Activated naive CD4-positive, alpha-beta T cell treated with anti-CD3 and anti-CD28 coated beads, Interleukin-2, amount 10 ng/mL, durations not matched to agents 7 days and 5 days (primary cell): ENCODE measurements at regions of chr5 and their contacts with region 1.

Region 1: DNA sequence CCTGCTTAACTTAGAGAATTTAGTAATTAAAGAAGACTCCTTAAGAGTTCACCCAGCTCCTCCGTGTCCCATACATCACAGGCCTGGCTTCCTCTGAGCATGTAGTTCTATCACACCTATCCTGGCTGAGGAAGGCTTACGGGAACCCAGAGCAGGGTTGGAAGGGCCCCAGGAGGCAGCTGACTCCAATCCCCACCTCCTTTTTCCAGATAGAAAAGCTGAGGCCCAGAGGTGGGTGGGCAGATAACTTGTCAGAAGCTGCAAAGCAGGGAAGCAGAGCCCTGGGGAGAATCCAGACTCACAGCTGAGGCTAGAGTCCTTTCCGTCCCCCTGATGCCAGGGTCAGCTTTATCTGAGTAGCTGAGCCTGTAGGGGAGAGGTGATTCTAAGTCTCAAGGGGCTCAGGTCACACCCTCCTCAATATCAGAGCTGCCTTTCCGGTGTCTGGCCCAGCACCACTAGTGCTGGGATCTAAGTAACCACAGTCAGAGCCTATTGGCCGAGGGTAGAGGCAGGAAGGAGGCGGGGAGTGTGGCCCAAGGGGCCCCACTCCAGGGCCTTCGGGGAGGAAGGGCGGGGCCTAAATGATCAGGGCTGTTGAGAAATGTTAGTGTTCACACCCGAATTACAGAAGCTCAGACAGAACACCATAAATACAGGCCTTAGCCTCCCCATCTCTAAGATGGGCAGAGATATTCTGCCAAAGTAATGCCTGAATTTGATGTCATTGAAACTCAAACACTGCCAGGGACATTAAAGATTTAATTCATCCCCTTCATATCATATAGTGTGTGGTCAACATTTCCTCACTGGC is 9.9 kb downstream of the CCDC69 start:
- DNase-seq: peak; percentile 94
- H3K4me3 Mint-ChIP-seq: peak overlapping the region; percentile 81
- H3K27ac Mint-ChIP-seq: peak overlapping the region; percentile 99
- H3K4me1 Mint-ChIP-seq: peaks cover 87% of the 10 kb centered on the region
- H3K27me3 Mint-ChIP-seq: no peaks in the 10 kb centered on the region

Region 2: GRCh38 chr5:151115274-151115905 is 98.6 kb before region 1 on chr5:
- CTCF ChIA-PET with region 1: no interaction called
- DNase-seq: peak; percentile 80
- H3K4me3 Mint-ChIP-seq: no peak overlapping the region
- H3K27ac Mint-ChIP-seq: peak overlapping the region; percentile 38
- H3K4me1 Mint-ChIP-seq: no peaks in the 10 kb centered on the region
- H3K27me3 Mint-ChIP-seq: no peaks in the 10 kb centered on the region

Region 3: DNA sequence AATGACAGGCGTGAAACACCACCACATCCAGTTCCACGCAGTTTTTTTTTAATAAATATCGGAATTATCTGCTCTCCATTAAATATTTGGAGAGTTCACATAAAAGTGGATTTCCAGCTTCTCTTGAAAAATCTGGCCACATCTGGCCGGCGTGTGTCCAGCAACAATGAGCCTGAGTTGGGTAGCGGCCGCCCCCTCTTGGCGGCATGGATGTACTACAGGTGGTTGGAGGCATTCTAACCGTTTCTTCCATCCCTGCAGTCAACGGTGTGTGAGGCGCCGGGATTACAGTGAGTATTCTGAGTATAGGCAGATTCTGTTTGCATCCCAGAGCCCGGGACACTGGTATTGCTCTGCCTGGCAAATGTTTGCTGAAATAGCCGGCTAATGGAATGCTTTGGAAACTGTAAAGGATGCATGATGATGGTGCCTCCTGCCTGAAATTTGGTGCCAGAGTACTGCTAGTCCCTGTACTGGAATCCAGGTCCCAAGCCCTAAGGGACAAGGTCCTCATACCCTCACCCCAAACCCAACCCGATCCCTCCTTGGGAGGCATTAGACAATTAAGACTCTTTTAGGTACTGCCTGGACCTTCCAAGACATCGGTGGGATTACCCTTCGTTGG is 25.3 kb after region 1 on chr5:
- CTCF ChIA-PET with region 1: interaction called, 10 read pairs
- DNase-seq: peak; percentile 65
- H3K4me3 Mint-ChIP-seq: no peak overlapping the region
- H3K27ac Mint-ChIP-seq: no peak overlapping the region
- H3K4me1 Mint-ChIP-seq: peaks cover 30% of the 10 kb centered on the region
- H3K27me3 Mint-ChIP-seq: no peaks in the 10 kb centered on the region

Region 4: DNA sequence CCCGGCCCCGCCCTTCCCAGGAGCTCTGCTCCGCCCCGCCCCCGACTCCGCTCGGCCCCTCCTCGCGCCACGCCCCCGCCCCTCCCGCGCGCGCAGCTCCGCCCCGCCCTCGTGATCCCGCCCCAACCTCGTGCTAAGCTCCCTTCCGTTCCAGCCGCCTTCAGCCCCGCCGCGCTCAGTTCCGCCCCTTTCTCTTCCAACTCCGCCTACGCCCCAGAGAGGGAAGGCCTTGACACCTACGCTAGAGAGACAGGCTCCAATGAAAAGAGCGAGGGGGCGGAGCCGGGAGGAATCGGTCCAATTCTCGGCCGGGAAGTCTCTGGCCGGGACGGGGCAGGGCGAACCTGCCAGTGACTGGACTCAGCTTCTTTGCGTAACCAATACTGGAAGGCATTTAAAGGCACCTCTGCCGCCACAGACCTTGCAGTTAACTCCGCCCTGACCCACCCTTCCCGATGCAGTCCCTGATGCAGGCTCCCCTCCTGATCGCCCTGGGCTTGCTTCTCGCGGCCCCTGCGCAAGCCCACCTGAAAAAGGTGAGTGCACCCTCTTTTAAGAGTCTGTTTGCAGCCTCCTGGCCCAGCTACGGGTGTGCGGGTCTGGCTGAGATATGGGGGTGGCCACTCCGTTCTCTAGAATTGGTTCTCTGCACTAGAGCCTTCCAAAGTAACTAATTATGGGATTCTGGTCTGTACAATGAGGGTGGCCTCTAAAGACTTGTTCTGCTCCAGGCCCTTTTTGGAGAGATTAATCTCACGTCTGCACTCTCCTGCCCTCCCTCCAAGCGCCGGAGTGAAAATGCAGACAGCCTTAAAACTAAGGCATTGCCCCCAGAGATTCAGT is 39.0 kb after region 1 on chr5 and contains the start of gene GM2A:
- CTCF ChIA-PET with region 1: interaction called, 15 read pairs
- DNase-seq: peak; percentile 99
- H3K4me3 Mint-ChIP-seq: peak within 1 kb of the TSS; percentile 89
- H3K27ac Mint-ChIP-seq: peak within 1 kb of the TSS; percentile 96
- H3K4me1 Mint-ChIP-seq: peaks cover 48% of the 10 kb centered on the region
- H3K27me3 Mint-ChIP-seq: no peaks in the 10 kb centered on the region

Region 5: DNA sequence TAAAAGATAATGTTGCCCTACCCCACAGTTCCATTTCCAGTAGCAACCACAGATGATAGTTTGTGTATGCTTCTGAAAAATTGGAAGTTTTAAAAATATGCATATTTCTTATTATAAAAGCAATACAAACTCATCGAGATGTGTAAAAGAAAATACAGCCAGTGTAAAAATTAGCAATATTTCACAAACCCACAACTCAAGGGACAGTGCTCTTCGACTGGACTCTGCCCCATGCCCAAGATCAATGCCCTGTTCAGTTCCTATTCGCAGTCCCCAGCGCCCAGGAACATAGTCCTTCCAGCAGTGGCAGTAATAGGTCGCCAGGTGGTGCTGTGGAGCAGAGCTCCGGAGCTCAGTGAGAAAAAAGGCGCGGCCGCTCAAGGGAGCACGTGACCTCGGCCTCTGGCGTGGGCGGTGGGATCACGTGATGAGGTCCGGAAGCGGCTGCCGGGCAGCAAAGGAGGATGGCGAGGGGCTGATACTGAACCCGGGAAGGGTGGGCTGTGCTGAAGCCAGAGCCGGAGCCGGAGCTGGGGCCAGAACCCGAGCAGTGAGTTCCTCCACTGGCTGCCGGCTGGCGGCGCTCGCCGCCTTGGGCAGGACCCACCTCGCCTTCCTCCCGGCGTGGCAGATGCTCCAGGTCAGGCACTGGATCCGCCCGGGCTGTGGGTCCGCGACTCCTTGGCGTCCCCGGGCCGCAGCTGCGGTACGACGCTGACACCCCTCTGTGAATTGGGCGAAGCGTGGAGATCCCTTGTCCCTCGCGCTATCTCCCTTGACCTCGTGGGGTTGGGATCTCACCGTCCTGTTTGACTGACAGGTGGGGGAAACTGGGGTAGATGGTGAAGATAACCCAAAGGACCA is 233.4 kb after region 1 on chr5 and contains the start of gene SLC36A1:
- CTCF ChIA-PET with region 1: no interaction called
- DNase-seq: peak; percentile 93
- H3K4me3 Mint-ChIP-seq: peak within 1 kb of the TSS; percentile 80
- H3K27ac Mint-ChIP-seq: peak within 1 kb of the TSS; percentile 85
- H3K4me1 Mint-ChIP-seq: peaks cover 12% of the 10 kb centered on the region
- H3K27me3 Mint-ChIP-seq: peaks cover 22% of the 10 kb centered on the region